ENCODE measurements at regions of chr15 and their contacts with region 1.

Region 1: GRCh38 chr15:70097337-70098169 is at the start of gene TLE3:
- DNase-seq: peak; percentile 85
- H3K4me3 ChIP-seq: peak within 1 kb of the TSS; percentile 78
- CTCF ChIP-seq: peak; percentile 57

Region 2: GRCh38 chr15:69576035-69576526 is 521.5 kb before region 1 on chr15:
- CTCF ChIA-PET with region 1: interaction called, 10 read pairs
- POLR2A ChIA-PET with region 1: no interaction called
- DNase-seq: no peak
- H3K4me3 ChIP-seq: no peak overlapping the region
- CTCF ChIP-seq: peak; percentile 85

Region 3: DNA sequence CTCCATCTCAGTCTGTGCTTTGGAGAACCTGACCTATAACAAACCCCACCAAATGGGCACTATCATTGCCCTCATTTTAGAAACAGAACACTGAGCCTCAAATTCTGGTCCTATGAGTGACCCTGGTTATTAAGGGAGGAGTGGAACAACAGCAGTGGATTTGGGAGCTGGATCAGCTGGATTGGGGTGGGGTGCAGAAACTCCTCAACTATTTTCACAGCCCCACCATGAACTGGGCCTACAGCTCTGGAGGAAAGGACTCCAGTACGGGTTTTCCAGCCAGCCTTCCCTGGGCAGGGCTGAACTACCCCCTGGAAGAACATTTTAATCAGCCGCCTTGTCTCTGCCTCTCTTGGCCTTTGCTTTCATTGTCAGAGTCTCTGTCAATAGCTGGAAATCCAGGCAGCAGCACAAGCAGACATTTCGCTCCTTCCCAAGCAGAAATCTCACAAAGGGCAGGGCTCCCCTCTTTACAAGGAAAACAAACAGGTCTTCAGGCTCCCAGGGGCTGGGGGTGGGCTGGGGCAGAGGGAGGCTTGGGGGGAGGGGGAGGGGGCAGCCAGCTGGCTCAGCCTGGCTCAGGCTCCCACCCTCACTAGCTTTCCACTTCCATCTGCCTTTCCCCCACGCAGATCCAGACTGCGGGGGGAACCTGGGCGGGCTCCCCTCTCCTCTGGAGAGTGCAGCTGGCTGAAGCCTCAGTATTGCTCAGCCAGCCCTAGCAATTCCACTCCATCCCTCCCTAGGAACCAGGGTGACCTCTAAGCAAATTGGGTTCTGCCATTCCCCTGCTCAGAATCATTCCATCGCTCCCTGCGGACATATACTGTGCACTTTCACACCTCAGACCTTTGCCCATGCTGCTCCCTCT is 13.9 kb after region 1 on chr15:
- CTCF ChIA-PET with region 1: interaction called, 22 read pairs
- POLR2A ChIA-PET with region 1: interaction called, 4 read pairs
- DNase-seq: no peak
- H3K4me3 ChIP-seq: no peak overlapping the region; the same call in 1 of the 2 replicates
- CTCF ChIP-seq: no peak

Measured in AG04449 (cell line).